Cardiac septum (tissue), 1 donor: ENCODE measurements at regions of chr12 and their contacts with region 1.

Region 1: DNA sequence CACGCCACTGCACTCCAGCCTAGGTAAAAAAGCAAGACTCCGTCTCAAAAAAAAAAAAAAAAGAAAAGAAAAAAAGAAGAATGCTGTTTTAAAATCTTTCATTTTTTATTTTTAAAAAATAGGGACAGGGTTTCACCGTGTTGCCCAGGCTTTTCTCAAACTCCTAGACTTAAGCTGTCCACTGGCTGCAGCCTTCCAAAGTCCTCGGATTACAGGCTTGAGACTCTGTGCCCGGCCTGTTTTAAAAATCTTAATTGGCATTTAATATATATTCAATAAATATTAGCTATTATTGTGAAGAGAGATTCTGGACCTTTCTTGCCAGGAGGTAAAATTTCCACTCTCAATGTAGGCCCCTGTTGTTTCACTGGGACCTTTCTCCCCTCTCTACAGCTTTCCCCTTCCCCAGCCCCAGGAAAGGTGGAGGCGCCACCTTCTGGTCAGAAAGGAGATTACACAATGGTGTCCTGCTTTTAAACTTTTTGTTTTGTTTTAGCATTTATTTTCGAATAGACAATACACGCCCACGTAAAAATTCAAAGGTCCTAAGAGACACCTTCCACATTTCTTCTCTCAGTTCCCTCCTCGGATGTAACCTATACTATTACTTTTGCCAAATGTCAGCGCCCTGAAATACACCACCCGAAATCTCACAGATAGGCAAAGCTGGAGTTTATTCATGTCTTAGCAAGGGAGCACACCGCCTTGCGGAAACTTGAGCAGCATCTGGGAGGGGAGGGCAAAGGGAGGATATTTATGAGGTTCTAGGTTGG is 23.8 kb upstream of the PHC1 start:
- DNase-seq: no peak

Region 2: GRCh38 chr12:8658346-8658745 is 232.2 kb before region 1 on chr12:
- intact Hi-C with region 1: loop called (anchors 5 kb)
- DNase-seq: no peak

Region 3: GRCh38 chr12:8681041-8681902 is 209.2 kb before region 1 on chr12:
- intact Hi-C with region 1: loop called (anchors 5 kb)
- DNase-seq: no peak

Region 4: GRCh38 chr12:9039397-9039977 is 149.0 kb after region 1 on chr12:
- intact Hi-C with region 1: loop called (anchors 5 kb)
- DNase-seq: no peak